ENCODE measurements at regions of chr11 and their contacts with region 1.

Region 1: DNA sequence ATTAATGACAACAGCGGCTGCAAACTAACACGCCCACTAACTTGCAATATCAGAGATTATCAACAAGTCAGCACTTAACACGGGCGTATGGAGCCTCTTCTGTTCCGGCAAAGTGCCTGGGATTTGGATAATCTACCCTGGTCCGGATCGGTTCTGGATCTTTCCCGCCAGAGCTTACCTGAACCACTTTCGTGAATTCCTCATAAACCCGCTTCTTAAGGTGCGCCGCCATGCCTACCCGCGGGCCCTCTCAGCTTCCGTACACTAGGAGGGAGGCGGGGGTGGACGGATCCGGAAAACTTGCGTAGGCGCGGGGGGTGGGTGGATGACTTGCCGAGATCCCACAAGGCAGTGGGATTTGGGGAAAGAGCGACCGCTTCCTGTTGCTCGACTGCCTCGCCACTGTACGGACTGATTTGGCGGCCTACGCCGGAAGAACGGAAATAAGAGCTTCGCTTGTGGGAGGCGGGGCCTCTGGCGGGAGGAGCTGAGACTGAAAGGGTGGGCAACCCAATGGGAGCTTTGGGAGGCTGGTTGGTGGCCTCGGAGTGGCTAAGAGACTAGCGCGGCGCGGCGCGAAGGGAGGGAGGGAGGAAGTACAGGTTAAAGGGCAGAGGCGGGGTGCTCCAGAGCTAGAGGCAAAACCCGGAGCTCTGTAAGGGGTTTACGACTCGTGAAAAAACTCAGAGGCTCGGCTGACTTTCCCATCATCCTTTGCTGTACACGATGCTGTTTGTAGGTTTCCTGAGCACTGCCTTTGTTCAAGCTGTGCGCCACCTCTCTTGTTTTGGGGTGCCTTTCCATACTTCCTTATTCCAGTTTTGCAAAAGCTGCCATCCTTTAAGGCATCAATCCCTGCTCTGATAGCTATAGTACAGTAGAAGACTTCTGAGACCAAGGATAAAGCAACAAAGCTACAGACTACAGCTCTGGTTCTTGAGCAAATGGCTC is at the start of gene INTS4:
- DNase-seq: peak; percentile 99
- ATAC-seq: peak; percentile 99
- total RNA-seq, gene INTS4: 49.1 TPM

Region 2: GRCh38 chr11:78022397-78023396 is 28.0 kb after region 1 on chr11 and contains the start of gene KCTD14:
- intact Hi-C with region 1: no loop called
- DNase-seq: peak; percentile 64
- ATAC-seq: peak; percentile 94
- total RNA-seq, gene KCTD14: 4.0 TPM

Region 3: GRCh38 chr11:78045851-78046485 is 51.3 kb after region 1 on chr11:
- intact Hi-C with region 1: loop called (anchors 10 kb)
- DNase-seq: peak; percentile 90
- ATAC-seq: peak; percentile 92

Region 4: GRCh38 chr11:78168539-78169477 is 174.1 kb after region 1 on chr11:
- intact Hi-C with region 1: no loop called
- DNase-seq: peak; percentile 92
- ATAC-seq: peak; percentile 96

Region 5: GRCh38 chr11:78325274-78325781 is 330.6 kb after region 1 on chr11:
- intact Hi-C with region 1: no loop called
- DNase-seq: no peak
- ATAC-seq: no peak

Region 6: GRCh38 chr11:79582434-79582833 is 1587.7 kb after region 1 on chr11:
- intact Hi-C with region 1: no loop called
- DNase-seq: no peak
- ATAC-seq: no peak